CD4-positive, alpha-beta memory T cell (primary cell): ENCODE measurements at regions of chr2 and their contacts with region 1.

Region 1: DNA sequence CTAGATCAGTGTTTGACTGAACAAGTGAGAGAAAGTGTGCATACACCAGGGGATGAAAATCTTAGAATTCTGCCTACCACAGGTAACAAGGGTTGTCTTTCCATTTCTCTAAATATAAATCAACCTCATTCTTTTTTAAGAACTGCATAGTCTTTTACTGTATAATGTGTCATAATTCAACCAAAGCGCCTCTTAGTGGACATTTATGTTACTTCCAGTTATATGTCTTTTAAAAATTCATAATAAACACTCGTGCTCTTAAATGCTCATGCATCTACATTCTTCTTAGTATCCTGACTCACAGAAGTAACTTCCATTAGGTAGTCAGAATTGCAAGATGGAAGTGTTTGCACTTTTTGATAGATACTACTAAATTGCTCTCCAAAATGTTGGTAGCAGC is 76.2 kb downstream of the CHRNA1 start:
- DNase-seq: peak in 4 of 5 donors; percentile 44 to 55 (median 48)
- H3K4me3 ChIP-seq: no peak overlapping the region
- H3K4me3 Mint-ChIP-seq: peak overlapping the region in 1 of 8 donors; percentile 17
- H3K27ac ChIP-seq: no peak overlapping the region
- H3K27ac Mint-ChIP-seq: peak overlapping the region; percentile 1 to 81 (median 56)
- H3K4me1 ChIP-seq: peaks cover 14% of the 10 kb centered on the region
- H3K4me1 Mint-ChIP-seq: peaks cover 13 to 25% (median 19%) of the 10 kb centered on the region in 4 donors
- H3K27me3 ChIP-seq: no peaks in the 10 kb centered on the region
- H3K27me3 Mint-ChIP-seq: peaks cover 0 to 2% of the 10 kb centered on the region in 2 donors

Region 2: DNA sequence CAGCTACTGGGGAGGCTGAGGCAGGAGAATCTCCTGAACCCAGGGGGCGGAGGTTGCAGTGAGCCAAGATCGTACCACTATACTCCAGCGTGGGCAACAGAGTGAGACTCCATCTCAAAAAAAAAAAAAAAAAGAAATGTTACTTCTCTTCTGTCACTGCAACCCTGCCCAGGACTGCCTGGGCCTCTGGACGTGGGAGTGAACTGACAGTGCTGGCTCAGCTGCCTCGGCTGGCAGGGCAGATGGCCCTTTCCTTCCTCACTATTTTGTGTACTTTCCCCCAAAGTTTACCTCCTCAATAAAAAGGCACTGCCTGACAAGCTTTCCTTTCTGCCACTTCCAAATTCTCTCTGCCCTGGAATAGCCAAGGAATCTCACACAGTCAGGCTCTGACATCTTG is 188.7 kb before region 1 on chr2:
- CTCF ChIA-PET with region 1: no interaction called
- POLR2A ChIA-PET with region 1: no interaction called
- intact Hi-C with region 1: no loop called
- DNase-seq: no peak
- H3K4me3 ChIP-seq: no peak overlapping the region
- H3K4me3 Mint-ChIP-seq: no peak overlapping the region
- H3K27ac ChIP-seq: no peak overlapping the region
- H3K27ac Mint-ChIP-seq: peak overlapping the region in 1 of 7 donors; percentile 36
- H3K4me1 ChIP-seq: peaks cover 24% of the 10 kb centered on the region
- H3K4me1 Mint-ChIP-seq: peaks cover 10 to 24% (median 19%) of the 10 kb centered on the region in 4 donors
- H3K27me3 ChIP-seq: no peaks in the 10 kb centered on the region
- H3K27me3 Mint-ChIP-seq: no peaks in the 10 kb centered on the region

Region 3: DNA sequence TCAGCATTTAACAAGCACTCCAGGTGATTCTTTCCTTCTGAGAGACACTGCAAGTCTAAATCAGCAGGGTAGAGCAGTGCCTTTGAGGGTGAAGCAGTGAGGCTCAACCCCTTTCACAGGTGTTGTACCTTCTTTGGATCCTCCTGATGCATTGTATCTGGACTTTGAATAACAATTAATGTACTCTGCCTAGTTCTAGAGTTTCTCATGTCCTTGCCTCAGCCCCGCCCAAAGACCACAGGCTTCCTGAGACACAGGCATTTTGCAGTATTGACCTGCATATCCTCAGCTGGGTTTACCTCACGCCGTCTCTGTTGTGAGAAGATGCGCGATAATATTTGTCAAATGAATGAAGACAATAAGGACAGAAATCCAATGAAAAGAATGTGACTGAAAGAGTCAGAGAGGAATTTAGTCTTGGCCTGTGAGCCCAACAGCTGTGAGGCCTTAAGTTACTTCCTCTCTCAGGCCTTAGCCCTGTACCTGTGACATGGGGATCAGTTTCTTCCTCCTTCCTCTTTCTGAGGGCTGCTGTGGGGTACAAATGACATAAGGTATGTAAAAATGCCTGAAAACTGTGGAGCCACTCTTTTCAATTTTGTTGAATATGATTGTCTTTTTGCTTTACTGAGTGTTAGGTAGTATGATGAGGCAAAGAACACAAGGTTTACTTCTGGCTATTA is 134.1 kb before region 1 on chr2:
- CTCF ChIA-PET with region 1: interaction called, 17 read pairs
- POLR2A ChIA-PET with region 1: interaction called, 4 read pairs
- intact Hi-C with region 1: no loop called
- DNase-seq: peak; percentile 33 to 58 (median 49)
- H3K4me3 ChIP-seq: no peak overlapping the region
- H3K4me3 Mint-ChIP-seq: peak overlapping the region; percentile 57 to 85 (median 74)
- H3K27ac ChIP-seq: peak overlapping the region; percentile 67
- H3K27ac Mint-ChIP-seq: peak overlapping the region; percentile 83 to 97 (median 89)
- H3K4me1 ChIP-seq: peaks cover 39% of the 10 kb centered on the region
- H3K4me1 Mint-ChIP-seq: peaks cover 31 to 52% (median 37%) of the 10 kb centered on the region in 4 donors
- H3K27me3 ChIP-seq: no peaks in the 10 kb centered on the region
- H3K27me3 Mint-ChIP-seq: no peaks in the 10 kb centered on the region

Region 4: DNA sequence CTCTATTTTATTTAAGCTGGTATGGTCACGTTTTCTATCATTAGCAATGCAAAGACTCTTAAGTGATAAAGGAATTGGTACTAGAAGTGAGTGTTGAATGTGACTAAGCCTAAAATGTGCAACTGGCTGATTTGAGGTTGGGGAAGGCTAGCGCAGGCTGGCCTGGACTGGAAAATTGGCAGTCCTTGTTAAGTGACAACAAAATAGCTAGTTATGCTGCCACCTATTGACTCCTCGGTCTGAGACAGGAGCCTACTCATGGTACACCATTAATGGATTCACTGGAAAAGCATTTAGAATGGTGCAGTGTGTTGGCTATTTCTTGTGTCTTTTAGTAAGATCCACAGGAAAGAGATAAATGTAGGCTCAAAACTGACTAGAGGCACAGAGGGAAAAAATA is 84.8 kb before region 1 on chr2:
- CTCF ChIA-PET with region 1: interaction called, 222 read pairs
- POLR2A ChIA-PET with region 1: interaction called, 85 read pairs
- intact Hi-C with region 1: loop called (anchors 1 kb)
- DNase-seq: peak; percentile 58 to 81 (median 63)
- H3K4me3 ChIP-seq: no peak overlapping the region
- H3K4me3 Mint-ChIP-seq: peak overlapping the region in 6 of 8 donors; percentile 13 to 62 (median 32)
- H3K27ac ChIP-seq: peak overlapping the region; percentile 11
- H3K27ac Mint-ChIP-seq: peak overlapping the region; percentile 71 to 99 (median 89)
- H3K4me1 ChIP-seq: peaks cover 84% of the 10 kb centered on the region
- H3K4me1 Mint-ChIP-seq: peaks cover 71 to 96% (median 78%) of the 10 kb centered on the region in 4 donors
- H3K27me3 ChIP-seq: no peaks in the 10 kb centered on the region
- H3K27me3 Mint-ChIP-seq: no peaks in the 10 kb centered on the region

Region 5: GRCh38 chr2:174634130-174635014 is 53.7 kb before region 1 on chr2:
- CTCF ChIA-PET with region 1: interaction called, 48 read pairs
- POLR2A ChIA-PET with region 1: interaction called, 39 read pairs
- intact Hi-C with region 1: no loop called
- DNase-seq: peak; percentile 48 to 66 (median 53)
- H3K4me3 ChIP-seq: peak overlapping the region; percentile 54 to 72
- H3K4me3 Mint-ChIP-seq: peak overlapping the region; percentile 91 to 94 (median 92)
- H3K27ac ChIP-seq: peak overlapping the region; percentile 76
- H3K27ac Mint-ChIP-seq: peak overlapping the region; percentile 89 to 98 (median 94)
- H3K4me1 ChIP-seq: peaks cover 58% of the 10 kb centered on the region
- H3K4me1 Mint-ChIP-seq: peaks cover 46 to 84% (median 56%) of the 10 kb centered on the region in 4 donors
- H3K27me3 ChIP-seq: no peaks in the 10 kb centered on the region
- H3K27me3 Mint-ChIP-seq: no peaks in the 10 kb centered on the region

Region 6: DNA sequence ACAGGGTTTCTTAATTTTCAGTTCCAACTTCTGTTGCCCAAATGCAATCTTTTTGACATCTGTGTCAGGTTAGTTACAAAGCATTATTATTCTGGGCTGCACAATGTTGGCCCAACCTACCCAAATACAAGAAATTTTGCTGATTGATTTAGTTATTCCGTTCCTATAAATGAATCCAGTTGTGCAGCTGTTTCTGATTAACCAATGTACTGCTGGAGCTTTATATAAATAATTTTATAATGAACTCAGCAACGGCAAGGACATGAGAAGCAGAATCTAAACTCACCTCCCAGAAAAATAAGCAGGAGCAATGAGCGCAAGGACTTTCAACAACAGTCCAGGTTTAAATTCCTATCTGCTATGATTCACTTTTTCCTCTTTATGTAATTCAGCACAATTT is 14.2 kb before region 1 on chr2:
- CTCF ChIA-PET with region 1: interaction called, 14 read pairs
- POLR2A ChIA-PET with region 1: no interaction called
- intact Hi-C with region 1: no loop called
- DNase-seq: no peak
- H3K4me3 ChIP-seq: no peak overlapping the region
- H3K4me3 Mint-ChIP-seq: no peak overlapping the region
- H3K27ac ChIP-seq: no peak overlapping the region
- H3K27ac Mint-ChIP-seq: no peak overlapping the region
- H3K4me1 ChIP-seq: peaks cover 30% of the 10 kb centered on the region
- H3K4me1 Mint-ChIP-seq: peaks cover 19 to 37% (median 27%) of the 10 kb centered on the region in 4 donors
- H3K27me3 ChIP-seq: no peaks in the 10 kb centered on the region
- H3K27me3 Mint-ChIP-seq: no peaks in the 10 kb centered on the region

Region 7: DNA sequence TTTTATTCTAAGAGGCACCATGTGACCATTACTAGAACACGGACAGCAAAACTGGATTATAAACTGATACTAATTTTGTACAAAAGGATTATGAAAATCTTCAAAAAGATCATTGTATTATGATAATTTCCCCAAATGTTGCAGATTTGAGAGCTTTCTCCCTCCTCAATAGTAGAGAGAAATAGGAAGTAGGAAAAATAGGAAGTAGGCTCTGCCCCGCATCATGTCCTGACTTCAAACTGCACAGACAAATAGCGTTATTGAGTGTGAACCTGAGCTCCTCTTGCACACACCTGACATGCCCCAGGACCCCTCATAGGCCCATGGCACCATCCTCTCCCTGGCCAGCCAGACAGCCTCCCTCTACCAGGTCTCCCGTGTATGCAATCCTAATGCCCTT is 50.8 kb after region 1 on chr2:
- CTCF ChIA-PET with region 1: no interaction called
- POLR2A ChIA-PET with region 1: no interaction called
- intact Hi-C with region 1: no loop called
- DNase-seq: no peak
- H3K4me3 ChIP-seq: no peak overlapping the region
- H3K4me3 Mint-ChIP-seq: no peak overlapping the region
- H3K27ac ChIP-seq: no peak overlapping the region
- H3K27ac Mint-ChIP-seq: no peak overlapping the region
- H3K4me1 ChIP-seq: no peaks in the 10 kb centered on the region
- H3K4me1 Mint-ChIP-seq: no peaks in the 10 kb centered on the region
- H3K27me3 ChIP-seq: no peaks in the 10 kb centered on the region
- H3K27me3 Mint-ChIP-seq: no peaks in the 10 kb centered on the region

Region 8: GRCh38 chr2:174888646-174889271 is 200.7 kb after region 1 on chr2:
- CTCF ChIA-PET with region 1: no interaction called
- POLR2A ChIA-PET with region 1: no interaction called
- intact Hi-C with region 1: no loop called
- DNase-seq: no peak
- H3K4me3 ChIP-seq: no peak overlapping the region
- H3K4me3 Mint-ChIP-seq: no peak overlapping the region
- H3K27ac ChIP-seq: no peak overlapping the region
- H3K27ac Mint-ChIP-seq: no peak overlapping the region
- H3K4me1 ChIP-seq: no peaks in the 10 kb centered on the region
- H3K4me1 Mint-ChIP-seq: peaks cover 0 to 2% (median 0%) of the 10 kb centered on the region in 4 donors
- H3K27me3 ChIP-seq: no peaks in the 10 kb centered on the region
- H3K27me3 Mint-ChIP-seq: no peaks in the 10 kb centered on the region

Region 9: GRCh38 chr2:175834477-175834876 is 1146.4 kb after region 1 on chr2:
- CTCF ChIA-PET with region 1: no interaction called
- POLR2A ChIA-PET with region 1: no interaction called
- intact Hi-C with region 1: no loop called
- DNase-seq: no peak
- H3K4me3 ChIP-seq: no peak overlapping the region
- H3K4me3 Mint-ChIP-seq: no peak overlapping the region
- H3K27ac ChIP-seq: no peak overlapping the region
- H3K27ac Mint-ChIP-seq: no peak overlapping the region
- H3K4me1 ChIP-seq: no peaks in the 10 kb centered on the region
- H3K4me1 Mint-ChIP-seq: no peaks in the 10 kb centered on the region
- H3K27me3 ChIP-seq: no peaks in the 10 kb centered on the region
- H3K27me3 Mint-ChIP-seq: peaks cover 7 to 17% of the 10 kb centered on the region in 2 donors